OCI-LY7 (cell line): ENCODE measurements at regions of chr7 and their contacts with region 1.

Region 1: DNA sequence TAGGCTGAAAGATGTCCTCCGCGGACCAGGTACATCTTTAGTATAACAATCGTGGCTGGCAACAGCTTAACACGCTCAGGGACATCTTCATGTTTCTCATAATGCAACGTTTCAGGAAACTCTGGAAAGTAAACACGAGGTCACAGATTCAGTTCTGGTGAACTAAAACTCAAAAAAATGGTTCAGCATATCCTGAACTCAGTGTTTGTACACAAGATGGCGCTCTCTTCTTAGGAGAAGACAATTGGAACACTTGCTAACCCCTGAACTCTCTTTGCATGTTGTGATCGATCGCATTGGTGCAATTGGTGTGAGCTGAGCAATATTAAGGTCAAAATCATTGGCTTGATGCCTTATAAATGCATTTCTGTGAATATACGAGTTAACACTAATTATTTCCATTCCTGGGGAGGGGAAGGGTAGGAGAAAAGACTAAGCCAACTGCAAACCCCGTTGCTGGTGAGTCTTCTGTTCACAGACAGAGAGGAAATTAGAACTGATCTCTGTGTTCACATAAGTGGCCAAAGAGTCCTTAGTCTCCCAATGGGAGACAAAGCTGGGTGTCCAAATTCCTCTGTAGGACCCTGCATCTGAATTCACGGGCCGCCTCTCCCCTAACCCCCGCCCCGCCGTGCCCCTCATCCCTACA is 52.6 kb upstream of the FAM180A start:
- DNase-seq: peak; percentile 81
- H3K4me3 ChIP-seq: no peak overlapping the region
- H3K27ac ChIP-seq: no peak overlapping the region
- H3K4me1 ChIP-seq: peaks cover 7% of the 10 kb centered on the region
- CTCF ChIP-seq: peak; percentile 96

Region 2: DNA sequence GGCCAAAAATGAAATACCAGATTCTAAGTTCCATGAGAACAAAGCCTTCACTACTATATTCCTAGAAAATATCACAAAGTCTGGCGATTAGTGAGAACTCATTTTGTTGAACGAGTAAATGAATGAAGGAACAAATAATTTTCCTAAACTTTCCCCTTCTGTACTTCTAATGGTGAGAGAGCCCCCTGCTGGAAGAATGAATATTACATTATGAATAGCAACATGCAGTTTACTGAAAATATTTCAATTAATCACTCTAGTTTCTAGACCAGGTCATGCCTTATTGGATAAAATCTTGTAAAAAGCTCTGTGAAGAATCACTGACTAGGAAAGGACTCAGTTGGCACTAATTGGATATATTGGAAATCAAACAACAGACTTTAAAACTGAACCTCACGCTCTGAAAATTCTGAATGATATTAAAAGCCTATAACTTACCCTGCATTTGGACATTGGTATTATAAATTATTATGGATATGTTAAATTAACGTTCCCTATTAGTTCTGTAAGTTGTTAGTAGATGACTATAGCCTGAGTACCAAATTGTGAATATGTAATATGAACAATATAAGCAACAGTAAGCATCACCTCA is 208.4 kb after region 1 on chr7:
- CTCF ChIA-PET with region 1: interaction called, 3 read pairs
- POLR2A ChIA-PET with region 1: interaction called, 3 read pairs
- intact Hi-C with region 1: loop called (anchors 1 kb)
- DNase-seq: peak; percentile 69
- H3K4me3 ChIP-seq: no peak overlapping the region
- H3K27ac ChIP-seq: no peak overlapping the region
- H3K4me1 ChIP-seq: peaks cover 17% of the 10 kb centered on the region
- CTCF ChIP-seq: peak; percentile 98

Region 3: GRCh38 chr7:136687693-136688322 is 886.6 kb after region 1 on chr7:
- CTCF ChIA-PET with region 1: no interaction called
- POLR2A ChIA-PET with region 1: no interaction called
- intact Hi-C with region 1: loop called (anchors 5 kb)
- DNase-seq: peak; percentile 58
- H3K4me3 ChIP-seq: no peak overlapping the region
- H3K27ac ChIP-seq: no peak overlapping the region
- H3K4me1 ChIP-seq: peaks cover 7% of the 10 kb centered on the region
- CTCF ChIP-seq: peak; percentile 88

Region 4: GRCh38 chr7:137454246-137454724 is 1653.1 kb after region 1 on chr7:
- CTCF ChIA-PET with region 1: no interaction called
- POLR2A ChIA-PET with region 1: no interaction called
- intact Hi-C with region 1: loop called (anchors 10 kb)
- DNase-seq: peak; percentile 45
- H3K4me3 ChIP-seq: no peak overlapping the region
- H3K27ac ChIP-seq: no peak overlapping the region
- H3K4me1 ChIP-seq: no peaks in the 10 kb centered on the region
- CTCF ChIP-seq: peak; percentile 92